ENCODE measurements at regions of chr6 and their contacts with region 1.

Region 1: GRCh38 chr6:44221291-44221960 is 2.0 kb upstream of the SLC29A1 start:
- DNase-seq: peak; percentile 85
- ATAC-seq: peak; percentile 70
- H3K4me3 ChIP-seq: peak overlapping the region in 1 of 3 experiments; percentile 36; a peak in 1 of 6 replicates
- H3K27ac ChIP-seq: no peak overlapping the region
- H3K4me1 ChIP-seq: peaks cover 87% of the 10 kb centered on the region
- H3K27me3 ChIP-seq: peaks cover 1 to 9% of the 10 kb centered on the region in 2 experiments; a peak in 3 of 5 replicates
- CTCF ChIP-seq: peak; percentile 91
- EP300 ChIP-seq: peak in 1 of 2 experiments; percentile 12; a peak in 1 of 4 replicates
- POLR2A ChIP-seq: no peak
- RAD21 ChIP-seq: peak; percentile 86

Region 2: GRCh38 chr6:44172731-44173500 is 48.5 kb before region 1 on chr6:
- CTCF ChIA-PET with region 1: no interaction called
- POLR2A ChIA-PET with region 1: interaction called, 5 read pairs
- in situ Hi-C with region 1: loop called (anchors 5 kb)
- intact Hi-C with region 1: loop called (anchors 1 kb)
- DNase-seq: peak; percentile 67
- ATAC-seq: peak; percentile 82
- H3K4me3 ChIP-seq: peak overlapping the region in 1 of 3 experiments; percentile 13; a peak in 1 of 6 replicates
- H3K27ac ChIP-seq: no peak overlapping the region
- H3K4me1 ChIP-seq: peaks cover 58% of the 10 kb centered on the region
- H3K27me3 ChIP-seq: peaks cover 5 to 30% of the 10 kb centered on the region in 2 experiments; a peak in 3 of 5 replicates
- CTCF ChIP-seq: peak; percentile 99
- EP300 ChIP-seq: no peak
- POLR2A ChIP-seq: no peak
- RAD21 ChIP-seq: peak; percentile 95

Region 3: DNA sequence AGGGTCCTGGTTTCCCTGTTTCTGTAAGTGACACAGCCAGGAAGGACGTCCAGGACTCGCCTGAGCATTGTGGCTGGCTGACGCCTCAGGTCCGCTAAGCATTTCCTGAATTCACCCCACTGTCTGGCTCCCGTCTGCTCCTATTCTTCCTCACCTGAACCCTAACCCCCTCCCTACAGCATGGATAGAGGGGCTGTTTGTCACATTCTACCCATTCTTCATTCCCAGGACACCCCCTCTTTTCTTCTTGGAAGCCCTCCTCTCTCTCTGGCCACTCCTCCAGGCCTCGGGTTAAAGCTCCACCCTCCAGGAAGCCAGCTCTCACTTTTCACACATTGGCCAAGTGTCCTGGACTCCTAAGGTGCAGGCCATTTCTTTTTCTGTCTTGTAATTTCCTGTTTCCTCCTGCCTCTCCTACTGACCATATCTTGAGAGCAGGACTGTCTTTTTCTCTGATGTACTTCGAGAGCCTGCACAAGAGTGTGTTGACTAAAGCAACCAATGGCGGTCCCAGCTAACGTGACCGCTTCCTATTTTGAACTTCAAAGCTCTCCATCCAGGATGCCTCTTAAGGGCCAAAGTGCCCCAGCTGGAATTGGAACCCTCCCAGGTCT is 28.9 kb before region 1 on chr6:
- CTCF ChIA-PET with region 1: no interaction called
- POLR2A ChIA-PET with region 1: interaction called, 10 read pairs
- in situ Hi-C with region 1: no loop called
- intact Hi-C with region 1: no loop called
- DNase-seq: no peak
- ATAC-seq: peak; percentile 82
- H3K4me3 ChIP-seq: peak overlapping the region; percentile 44 to 70 (median 63)
- H3K27ac ChIP-seq: no peak overlapping the region
- H3K4me1 ChIP-seq: peaks cover 58% of the 10 kb centered on the region
- H3K27me3 ChIP-seq: peaks cover 0 to 5% of the 10 kb centered on the region in 2 experiments; a peak in 2 of 5 replicates
- CTCF ChIP-seq: peak; percentile 6; the same call in 1 of the 2 replicates
- EP300 ChIP-seq: no peak
- POLR2A ChIP-seq: peak in 1 of 2 experiments; percentile 46; a peak in 1 of 4 replicates
- RAD21 ChIP-seq: no peak

Region 4: DNA sequence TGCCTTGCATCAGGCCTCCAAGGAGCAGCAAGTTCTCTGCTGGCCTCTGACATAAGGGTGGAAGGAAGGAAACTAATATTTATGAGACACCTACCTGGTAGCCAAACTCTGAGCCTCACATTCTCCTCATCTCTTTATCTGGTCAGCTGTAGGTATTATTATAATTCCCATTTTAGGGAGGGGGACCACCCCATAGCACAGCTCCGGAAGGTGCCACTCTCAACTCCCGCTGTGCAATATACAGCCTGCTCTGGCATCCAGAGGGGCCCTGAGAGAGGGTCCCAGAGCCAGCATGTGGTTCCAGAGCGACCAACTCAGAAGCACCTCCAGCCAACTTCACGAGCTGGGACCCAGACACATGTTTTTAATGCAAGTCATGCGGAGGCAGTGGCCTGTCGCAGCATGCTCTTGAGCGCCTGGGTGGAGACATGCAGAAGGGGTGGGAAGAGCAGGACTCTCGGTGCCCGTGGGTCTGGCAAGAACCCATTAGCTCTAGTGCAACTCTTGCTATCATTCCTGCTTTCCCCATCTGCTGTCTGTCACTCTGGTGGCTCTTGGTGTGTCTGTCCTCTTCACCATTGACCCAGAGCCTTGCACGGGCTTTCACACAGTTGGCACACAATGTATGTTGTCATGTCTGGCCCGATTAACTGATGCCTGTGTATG is 19.7 kb before region 1 on chr6:
- CTCF ChIA-PET with region 1: no interaction called
- POLR2A ChIA-PET with region 1: interaction called, 3 read pairs
- in situ Hi-C with region 1: no loop called
- intact Hi-C with region 1: loop called (anchors 2 kb)
- DNase-seq: no peak
- ATAC-seq: peak; percentile 11
- H3K4me3 ChIP-seq: no peak overlapping the region
- H3K27ac ChIP-seq: no peak overlapping the region
- H3K4me1 ChIP-seq: peaks cover 63% of the 10 kb centered on the region
- H3K27me3 ChIP-seq: no peaks in the 10 kb centered on the region; a peak in 2 of 5 replicates
- CTCF ChIP-seq: no peak
- EP300 ChIP-seq: no peak
- POLR2A ChIP-seq: no peak
- RAD21 ChIP-seq: no peak

Region 5: GRCh38 chr6:44257025-44257752 is 35.8 kb after region 1 on chr6 and contains the start of gene SLC35B2:
- CTCF ChIA-PET with region 1: interaction called, 3 read pairs
- POLR2A ChIA-PET with region 1: interaction called, 11 read pairs
- in situ Hi-C with region 1: no loop called
- intact Hi-C with region 1: no loop called
- DNase-seq: peak; percentile 88
- ATAC-seq: peak; percentile 71
- H3K4me3 ChIP-seq: peak within 1 kb of the TSS; percentile 66 to 84 (median 71)
- H3K27ac ChIP-seq: peak within 1 kb of the TSS; percentile 93
- H3K4me1 ChIP-seq: peaks cover 53% of the 10 kb centered on the region
- H3K27me3 ChIP-seq: no peaks in the 10 kb centered on the region; a peak in 1 of 5 replicates
- CTCF ChIP-seq: peak; percentile 73
- EP300 ChIP-seq: peak in 1 of 2 experiments; percentile 10; a peak in 1 of 4 replicates
- POLR2A ChIP-seq: peak in 1 of 2 experiments; percentile 70; a peak in 2 of 4 replicates
- RAD21 ChIP-seq: no peak
- total RNA-seq, gene SLC35B2: 34.9 and 61.1 TPM in 2 replicates

Region 6: GRCh38 chr6:44338228-44339122 is 117.0 kb after region 1 on chr6:
- CTCF ChIA-PET with region 1: no interaction called
- POLR2A ChIA-PET with region 1: no interaction called
- in situ Hi-C with region 1: no loop called
- intact Hi-C with region 1: no loop called
- DNase-seq: peak; percentile 72
- ATAC-seq: peak; percentile 89
- H3K4me3 ChIP-seq: no peak overlapping the region
- H3K27ac ChIP-seq: no peak overlapping the region
- H3K4me1 ChIP-seq: no peaks in the 10 kb centered on the region
- H3K27me3 ChIP-seq: peaks cover 0 to 56% of the 10 kb centered on the region in 2 experiments; a peak in 4 of 5 replicates
- CTCF ChIP-seq: peak; percentile 94
- EP300 ChIP-seq: no peak
- POLR2A ChIP-seq: no peak
- RAD21 ChIP-seq: peak; percentile 87

Measured in HepG2 (cell line).